BJ (cell line): ENCODE measurements at regions of chr16 and their contacts with region 1.

Region 1: GRCh38 chr16:84952335-84953189 is 58.8 kb downstream of the ZDHHC7 start:
- DNase-seq: no peak
- H3K4me3 ChIP-seq: no peak overlapping the region
- H3K27me3 ChIP-seq: peaks cover 2% of the 10 kb centered on the region; the same call in 1 of the 2 replicates
- CTCF ChIP-seq: peak; percentile 87

Region 2: DNA sequence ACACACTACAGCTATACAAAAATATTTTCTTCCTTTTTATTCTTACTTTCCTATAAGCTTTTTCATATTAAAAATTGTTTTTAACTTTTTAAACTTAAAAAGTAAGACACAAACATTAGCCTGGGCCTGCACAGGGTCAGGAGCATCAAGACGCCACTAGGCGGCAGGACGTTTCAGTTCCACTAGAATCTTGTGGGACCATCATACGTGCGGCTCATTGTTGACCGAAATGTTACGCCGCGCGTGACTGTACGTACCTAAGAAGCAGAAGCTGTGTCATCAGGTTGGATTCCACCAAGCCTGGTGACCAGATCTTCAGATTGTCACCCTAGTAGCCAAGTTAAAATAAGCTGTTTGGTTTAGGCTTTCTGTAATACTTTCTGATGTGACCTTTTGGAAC is 205.7 kb before region 1 on chr16:
- CTCF ChIA-PET with region 1: interaction called, 122 read pairs
- POLR2A ChIA-PET with region 1: no interaction called
- DNase-seq: no peak
- H3K4me3 ChIP-seq: no peak overlapping the region
- H3K27me3 ChIP-seq: no peaks in the 10 kb centered on the region
- CTCF ChIP-seq: peak; percentile 34

Region 3: DNA sequence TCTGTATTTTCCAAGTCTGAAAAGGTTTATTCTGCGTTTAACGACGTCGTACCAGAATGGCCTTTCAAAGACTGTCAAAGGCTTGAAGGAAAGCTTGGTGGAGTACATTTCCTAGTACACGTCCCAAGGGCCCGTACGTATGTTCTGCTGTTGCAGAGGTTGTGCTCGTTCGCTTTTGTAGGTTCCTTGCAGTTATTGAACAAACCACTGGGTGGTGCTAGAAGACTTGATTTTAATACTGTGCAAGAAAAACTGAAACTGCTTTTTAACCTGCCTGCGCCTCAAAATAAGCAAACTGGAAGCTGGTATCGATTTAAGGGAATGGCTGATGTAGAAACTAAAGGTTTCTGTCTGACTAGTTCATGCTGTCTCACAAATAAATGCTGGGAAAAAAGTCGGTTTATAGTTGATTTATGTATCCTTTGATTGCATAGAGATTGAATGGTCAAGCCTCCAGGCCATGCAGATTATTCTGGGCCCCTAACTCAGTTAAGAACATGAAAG is 198.2 kb before region 1 on chr16:
- CTCF ChIA-PET with region 1: interaction called, 122 read pairs
- POLR2A ChIA-PET with region 1: no interaction called
- DNase-seq: peak; percentile 41
- H3K4me3 ChIP-seq: no peak overlapping the region
- H3K27me3 ChIP-seq: no peaks in the 10 kb centered on the region
- CTCF ChIP-seq: peak; percentile 72

Region 4: GRCh38 chr16:84851192-84852127 is 101.1 kb before region 1 on chr16:
- CTCF ChIA-PET with region 1: no interaction called
- POLR2A ChIA-PET with region 1: no interaction called
- DNase-seq: peak; percentile 88
- H3K4me3 ChIP-seq: no peak overlapping the region
- H3K27me3 ChIP-seq: no peaks in the 10 kb centered on the region
- CTCF ChIP-seq: no peak

Region 5: DNA sequence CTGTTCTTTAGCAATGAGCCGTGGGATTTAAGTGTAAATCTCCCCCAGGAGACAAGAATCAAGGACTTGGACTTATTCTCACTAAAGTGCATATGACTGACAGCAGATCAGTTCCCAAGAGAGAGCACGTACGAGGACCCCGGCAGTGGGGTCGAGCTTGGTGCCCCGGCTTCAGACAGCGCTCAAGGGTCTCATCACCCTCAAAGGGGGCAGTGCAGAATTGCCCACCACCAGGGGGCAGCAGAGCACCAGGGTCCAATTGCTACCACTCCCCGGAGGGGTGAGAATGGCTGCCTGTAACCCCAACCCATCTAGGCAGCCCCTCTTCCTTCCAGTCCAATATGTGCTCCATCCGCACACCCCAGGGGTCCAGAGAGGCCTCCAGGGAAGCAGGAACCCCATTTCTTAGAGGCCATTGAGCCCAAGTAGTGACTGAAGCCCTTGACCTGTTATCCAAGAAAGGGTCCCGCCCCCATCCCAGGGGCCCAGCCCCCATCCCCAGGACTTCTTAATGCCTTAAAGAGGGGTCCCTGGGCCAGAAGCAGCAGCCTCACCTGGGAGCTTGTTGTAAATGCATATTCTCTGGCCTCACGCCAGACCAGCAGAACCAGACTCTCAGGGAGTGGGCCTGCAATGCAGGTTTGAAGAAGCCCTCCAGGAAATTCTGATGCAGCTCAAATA is 27.3 kb before region 1 on chr16:
- CTCF ChIA-PET with region 1: interaction called, 120 read pairs
- POLR2A ChIA-PET with region 1: no interaction called
- DNase-seq: no peak
- H3K4me3 ChIP-seq: no peak overlapping the region
- H3K27me3 ChIP-seq: no peaks in the 10 kb centered on the region
- CTCF ChIP-seq: peak; percentile 92

Region 6: GRCh38 chr16:84933774-84934631 is 18.6 kb before region 1 on chr16:
- CTCF ChIA-PET with region 1: interaction called, 36 read pairs
- POLR2A ChIA-PET with region 1: no interaction called
- DNase-seq: no peak
- H3K4me3 ChIP-seq: no peak overlapping the region
- H3K27me3 ChIP-seq: no peaks in the 10 kb centered on the region
- CTCF ChIP-seq: no peak

Region 7: GRCh38 chr16:84940670-84941551 is 11.7 kb before region 1 on chr16:
- CTCF ChIA-PET with region 1: interaction called, 22 read pairs
- POLR2A ChIA-PET with region 1: no interaction called
- DNase-seq: no peak
- H3K4me3 ChIP-seq: no peak overlapping the region
- H3K27me3 ChIP-seq: no peaks in the 10 kb centered on the region
- CTCF ChIP-seq: peak; percentile 53

Region 8: DNA sequence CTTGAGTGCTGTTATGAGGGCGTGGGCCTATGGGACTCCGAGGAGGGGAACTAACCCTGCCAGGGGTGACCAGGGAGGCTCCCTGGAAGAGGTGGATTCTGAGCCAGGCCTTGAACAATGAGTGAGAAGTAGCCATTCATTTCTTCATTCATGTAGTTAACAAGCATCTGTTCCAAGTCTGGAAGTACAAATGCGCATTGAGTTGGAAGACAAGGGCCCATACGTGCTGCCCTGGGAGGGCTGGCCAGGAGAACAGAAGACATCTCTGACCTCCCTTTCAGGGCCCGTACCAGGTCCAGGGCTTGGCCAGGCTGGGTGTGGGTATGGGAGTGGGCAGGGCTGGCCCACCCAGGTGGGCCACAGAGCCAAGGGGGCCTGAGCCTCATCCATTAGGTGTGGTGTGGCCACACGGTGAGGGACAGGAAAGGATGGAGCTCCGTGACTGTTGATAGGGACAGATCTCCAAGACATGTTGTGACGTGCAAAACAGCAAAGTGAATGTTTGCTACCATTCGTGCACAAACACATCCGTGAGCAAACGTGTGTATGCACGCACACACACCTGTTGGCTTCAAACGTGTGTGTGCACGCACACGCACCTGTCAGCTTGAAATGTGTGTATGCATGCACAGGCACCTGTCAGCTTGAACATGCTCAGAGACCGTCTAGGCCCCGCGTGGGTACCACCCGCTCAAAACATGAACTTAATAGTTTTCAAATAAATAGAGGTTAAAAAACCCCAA is 12.0 kb after region 1 on chr16:
- CTCF ChIA-PET with region 1: interaction called, 22 read pairs
- POLR2A ChIA-PET with region 1: no interaction called
- DNase-seq: no peak
- H3K4me3 ChIP-seq: no peak overlapping the region
- H3K27me3 ChIP-seq: peaks cover 2% of the 10 kb centered on the region; the same call in 1 of the 2 replicates
- CTCF ChIP-seq: no peak

Region 9: DNA sequence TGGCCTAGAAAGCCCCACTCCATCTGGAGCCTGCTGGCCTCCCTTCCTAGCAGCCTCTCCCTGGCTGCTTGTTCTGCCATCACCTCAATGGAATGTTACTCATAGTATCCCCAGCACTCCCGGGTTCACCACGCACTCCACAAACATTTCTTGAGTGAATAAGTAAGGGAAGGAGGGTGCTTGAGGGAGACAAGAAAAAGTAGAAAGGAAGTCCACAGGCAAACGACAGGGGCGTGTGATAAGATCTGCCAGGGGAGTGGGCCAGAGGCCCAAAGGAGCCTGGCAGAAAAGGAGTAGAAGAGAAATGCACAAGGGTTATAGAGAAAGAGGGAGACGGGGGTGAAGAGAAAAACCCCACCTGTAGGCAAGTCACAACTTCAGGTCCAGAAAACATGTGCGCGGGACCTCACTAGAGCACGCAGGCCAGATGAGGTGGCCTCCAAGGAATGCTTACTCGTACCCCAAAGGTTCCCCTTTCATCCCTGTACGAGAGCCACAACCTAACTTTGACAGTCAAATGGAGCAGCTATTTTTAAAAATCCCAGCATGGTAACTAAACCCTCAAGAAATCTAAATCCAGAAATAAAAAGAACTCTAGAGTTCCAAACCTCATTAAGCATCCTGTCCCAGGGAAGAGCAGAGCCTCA is 52.1 kb after region 1 on chr16:
- CTCF ChIA-PET with region 1: no interaction called
- POLR2A ChIA-PET with region 1: no interaction called
- DNase-seq: peak; percentile 74
- H3K4me3 ChIP-seq: no peak overlapping the region; the same call in 1 of the 2 replicates
- H3K27me3 ChIP-seq: no peaks in the 10 kb centered on the region
- CTCF ChIP-seq: no peak